ENCODE measurements at regions of chr5 and their contacts with region 1.

Region 1: GRCh38 chr5:132064738-132065331 is 4.4 kb downstream of the IL3 start:
- DNase-seq: peak; percentile 73
- H3K4me3 Mint-ChIP-seq: no peak overlapping the region
- H3K27ac Mint-ChIP-seq: peak overlapping the region; percentile 71
- H3K4me1 Mint-ChIP-seq: peaks cover 55% of the 10 kb centered on the region
- H3K27me3 Mint-ChIP-seq: no peaks in the 10 kb centered on the region

Region 2: GRCh38 chr5:131634996-131635754 is 429.7 kb before region 1 on chr5 and contains the start of gene RAPGEF6:
- intact Hi-C with region 1: loop called (anchors 2 kb)
- DNase-seq: peak; percentile 98
- H3K4me3 Mint-ChIP-seq: peak within 1 kb of the TSS; percentile 95
- H3K27ac Mint-ChIP-seq: peak within 1 kb of the TSS; percentile 97
- H3K4me1 Mint-ChIP-seq: peaks cover 30% of the 10 kb centered on the region
- H3K27me3 Mint-ChIP-seq: no peaks in the 10 kb centered on the region
- total RNA-seq, gene RAPGEF6: 31.0 and 33.9 TPM in 2 replicates

Region 3: DNA sequence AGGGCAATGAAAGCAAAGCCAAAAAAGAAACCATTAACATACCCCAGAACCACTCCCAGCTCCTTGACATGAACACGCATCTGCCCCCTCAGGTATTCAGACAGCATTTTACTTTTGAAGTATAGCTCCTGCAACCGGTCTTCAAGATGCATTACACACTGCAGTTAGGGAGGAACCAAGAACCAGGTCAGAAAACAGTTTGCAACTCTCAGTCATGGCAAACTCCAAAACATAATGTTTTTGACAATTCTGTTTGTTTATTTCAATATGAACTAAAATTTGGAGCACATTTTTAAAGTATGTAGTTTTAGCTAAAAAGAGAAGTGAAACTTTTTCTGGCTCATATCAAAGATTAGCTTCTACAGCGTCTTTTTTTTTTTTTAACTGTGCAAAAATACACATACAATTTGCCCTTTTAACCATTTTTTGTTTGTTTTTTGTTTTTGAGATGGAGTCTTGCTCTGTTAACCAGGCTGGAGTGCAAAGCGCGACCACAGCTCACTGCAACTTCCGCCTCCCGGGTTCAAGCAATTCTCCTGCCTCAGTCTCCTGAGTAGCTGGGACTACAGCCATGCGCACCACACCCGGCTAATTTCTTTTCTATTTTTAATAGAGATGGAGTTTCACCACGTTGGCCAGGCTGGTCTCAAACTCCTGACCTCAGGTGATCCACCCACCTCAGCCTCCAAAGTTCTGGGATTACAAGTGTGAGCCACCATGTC is 417.6 kb before region 1 on chr5:
- intact Hi-C with region 1: no loop called
- DNase-seq: no peak
- H3K4me3 Mint-ChIP-seq: no peak overlapping the region
- H3K27ac Mint-ChIP-seq: no peak overlapping the region
- H3K4me1 Mint-ChIP-seq: peaks cover 2% of the 10 kb centered on the region
- H3K27me3 Mint-ChIP-seq: no peaks in the 10 kb centered on the region

Region 4: DNA sequence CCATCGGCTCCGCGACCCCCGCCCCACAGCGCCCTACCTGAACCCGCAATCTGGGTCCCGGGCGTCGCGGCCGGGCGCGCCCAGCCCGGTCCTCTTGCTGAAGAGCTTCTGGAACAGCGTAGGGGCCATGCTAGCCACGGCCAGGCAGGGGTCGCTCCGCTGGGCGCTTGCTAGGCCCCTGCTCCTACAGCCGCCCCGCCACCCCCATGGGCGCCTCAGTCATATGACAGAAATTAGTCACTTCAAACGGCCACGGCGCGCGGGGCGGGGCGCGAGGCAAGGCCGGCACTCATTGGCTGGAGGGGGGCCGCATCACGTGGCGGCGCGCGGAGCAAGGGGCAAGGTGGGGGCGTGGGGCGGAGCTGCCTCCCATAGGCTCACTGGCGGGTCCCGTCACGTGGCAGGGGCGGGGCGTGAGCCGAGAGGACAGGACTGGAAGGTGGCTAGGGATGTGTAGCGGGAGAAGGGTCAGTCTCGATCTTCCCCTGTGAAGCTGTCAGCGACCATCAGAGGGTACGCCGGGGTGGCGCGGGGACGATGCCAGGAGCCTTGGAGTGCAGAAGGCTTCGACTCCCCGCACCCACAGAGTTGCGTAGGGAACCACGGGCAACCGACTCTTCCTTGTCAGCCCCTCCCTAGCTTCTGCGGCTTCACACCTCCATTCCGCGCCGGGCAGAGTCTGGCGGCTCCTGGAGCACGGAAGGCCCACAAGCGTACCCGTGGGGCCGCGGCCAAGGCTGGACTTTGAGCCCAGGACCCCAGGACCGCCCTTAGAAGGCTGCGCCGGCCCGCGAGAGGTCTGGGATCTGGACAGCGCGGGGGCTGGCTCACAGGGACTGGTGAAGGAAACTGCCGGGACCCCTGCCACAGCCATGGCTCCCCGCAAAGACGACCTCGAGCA is 267.8 kb before region 1 on chr5 and contains the start of gene FNIP1:
- intact Hi-C with region 1: loop called (anchors 10 kb)
- DNase-seq: peak; percentile 99
- H3K4me3 Mint-ChIP-seq: peak within 1 kb of the TSS; percentile 97
- H3K27ac Mint-ChIP-seq: peak within 1 kb of the TSS; percentile 91
- H3K4me1 Mint-ChIP-seq: peaks cover 28% of the 10 kb centered on the region
- H3K27me3 Mint-ChIP-seq: peaks cover 8% of the 10 kb centered on the region
- total RNA-seq, gene FNIP1: 18.1 and 18.8 TPM in 2 replicates

Region 5: DNA sequence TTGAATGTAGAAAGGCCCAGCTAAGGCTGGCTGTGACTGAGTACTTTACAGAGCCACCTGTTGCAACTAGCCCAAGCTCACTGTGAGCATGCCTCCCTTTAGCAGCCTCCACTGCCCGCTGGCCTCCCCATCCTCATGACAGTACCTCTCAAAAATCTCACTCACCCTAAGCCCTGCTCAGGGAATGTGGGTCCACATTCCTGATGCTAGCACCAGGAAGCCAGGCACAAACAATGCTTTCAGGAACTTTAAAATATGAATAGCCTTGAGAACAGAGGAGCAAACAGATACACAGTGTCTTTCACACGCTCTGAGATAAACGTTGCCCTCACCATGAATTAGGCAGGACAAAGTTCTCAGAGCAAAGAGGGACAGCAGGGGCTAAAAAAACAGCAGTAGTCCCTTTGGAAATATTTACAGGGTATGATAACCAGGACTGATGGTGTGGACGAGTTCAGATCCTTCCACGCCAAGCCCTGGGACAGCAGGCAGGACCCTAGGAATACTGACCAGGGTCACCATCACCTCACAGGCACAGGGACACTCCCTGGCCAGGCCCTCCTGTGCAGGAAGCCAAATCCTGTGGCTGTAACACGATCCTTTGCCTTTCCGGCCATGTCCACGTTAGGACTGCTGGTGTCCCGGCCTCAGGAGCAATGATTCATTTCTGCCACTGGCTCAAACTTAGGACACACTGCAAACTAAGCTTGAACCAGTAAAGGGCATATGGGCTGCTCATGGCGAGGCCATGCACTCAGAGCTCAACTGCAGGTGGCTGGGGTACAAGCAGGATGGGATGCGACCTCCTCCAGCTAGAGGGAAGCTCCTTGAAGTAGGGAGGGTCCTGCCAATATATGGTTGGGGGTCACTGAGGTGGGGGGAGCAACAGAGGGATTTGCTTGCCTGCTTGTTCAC is 62.9 kb before region 1 on chr5:
- intact Hi-C with region 1: no loop called
- DNase-seq: no peak
- H3K4me3 Mint-ChIP-seq: no peak overlapping the region
- H3K27ac Mint-ChIP-seq: no peak overlapping the region
- H3K4me1 Mint-ChIP-seq: peaks cover 34% of the 10 kb centered on the region
- H3K27me3 Mint-ChIP-seq: no peaks in the 10 kb centered on the region

Region 6: GRCh38 chr5:132019857-132020555 is 44.8 kb before region 1 on chr5:
- intact Hi-C with region 1: loop called (anchors 2 kb)
- DNase-seq: peak; percentile 82
- H3K4me3 Mint-ChIP-seq: peak overlapping the region; percentile 34
- H3K27ac Mint-ChIP-seq: peak overlapping the region; percentile 92
- H3K4me1 Mint-ChIP-seq: peaks cover 48% of the 10 kb centered on the region
- H3K27me3 Mint-ChIP-seq: peaks cover 24% of the 10 kb centered on the region

Region 7: DNA sequence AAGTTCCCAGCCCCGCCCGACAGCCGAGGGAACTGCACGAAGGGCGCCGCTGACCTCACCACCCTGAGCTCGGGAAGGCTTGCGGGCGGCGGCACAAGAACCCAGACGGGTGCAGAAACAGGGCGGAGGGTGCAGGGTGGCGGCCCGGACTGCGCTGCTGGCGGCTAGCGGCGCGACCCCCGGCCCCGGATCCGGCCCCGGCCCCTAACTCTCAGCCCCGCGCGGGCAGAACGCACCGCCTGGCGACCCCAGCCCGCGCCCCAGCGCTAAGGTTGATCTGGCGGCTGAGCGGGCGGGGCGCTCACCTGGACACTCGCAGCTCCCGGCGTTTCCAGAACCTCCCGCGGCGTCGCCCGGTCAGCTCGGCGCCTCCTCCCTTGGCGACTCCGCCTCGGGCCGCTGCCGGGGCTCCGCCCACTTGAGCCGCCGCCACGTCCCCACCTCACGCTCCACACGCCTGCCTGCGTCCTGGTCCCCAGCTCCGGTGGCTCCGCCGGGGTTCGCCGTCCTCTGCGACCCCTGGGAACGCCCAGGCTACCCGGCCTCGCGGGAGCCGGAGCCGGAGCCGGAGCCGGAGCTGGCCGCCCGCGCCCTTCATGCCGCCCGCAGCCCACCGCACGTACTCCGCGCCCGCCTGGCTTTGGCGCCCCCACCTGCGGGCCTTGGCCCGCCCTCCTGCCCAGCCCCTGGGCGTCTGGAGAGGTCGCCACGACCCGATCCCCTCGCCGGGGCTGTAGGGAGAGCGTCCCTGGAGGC is 162.8 kb after region 1 on chr5 and contains the start of gene P4HA2:
- intact Hi-C with region 1: loop called (anchors 2 kb)
- DNase-seq: peak; percentile 40
- H3K4me3 Mint-ChIP-seq: peak within 1 kb of the TSS; percentile 76
- H3K27ac Mint-ChIP-seq: no peak within 1 kb of the TSS
- H3K4me1 Mint-ChIP-seq: peaks cover 56% of the 10 kb centered on the region
- H3K27me3 Mint-ChIP-seq: peaks cover 12% of the 10 kb centered on the region
- total RNA-seq, gene P4HA2: 44.9 and 47.0 TPM in 2 replicates

Region 8: DNA sequence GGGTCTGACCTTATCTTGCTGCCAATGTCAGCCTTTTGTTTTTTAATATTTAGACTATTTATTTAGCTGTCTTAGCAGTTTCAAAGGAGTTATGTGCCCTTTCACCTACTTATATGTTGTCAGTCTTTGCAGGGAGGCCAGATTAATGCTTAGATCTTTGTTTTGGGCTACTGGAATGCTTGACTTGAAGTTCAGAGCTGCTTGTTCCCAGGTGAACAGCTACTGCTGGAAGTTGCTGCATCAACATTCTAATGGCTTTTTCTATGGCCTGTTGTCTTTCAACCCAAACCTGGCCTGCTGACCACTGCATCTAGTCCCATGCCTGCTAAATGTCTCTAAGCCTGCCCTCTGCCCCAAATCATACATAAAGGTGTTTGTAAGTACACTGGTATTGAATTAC is 307.7 kb after region 1 on chr5:
- intact Hi-C with region 1: no loop called
- DNase-seq: no peak
- H3K4me3 Mint-ChIP-seq: no peak overlapping the region
- H3K27ac Mint-ChIP-seq: no peak overlapping the region
- H3K4me1 Mint-ChIP-seq: peaks cover 20% of the 10 kb centered on the region
- H3K27me3 Mint-ChIP-seq: no peaks in the 10 kb centered on the region

Region 9: DNA sequence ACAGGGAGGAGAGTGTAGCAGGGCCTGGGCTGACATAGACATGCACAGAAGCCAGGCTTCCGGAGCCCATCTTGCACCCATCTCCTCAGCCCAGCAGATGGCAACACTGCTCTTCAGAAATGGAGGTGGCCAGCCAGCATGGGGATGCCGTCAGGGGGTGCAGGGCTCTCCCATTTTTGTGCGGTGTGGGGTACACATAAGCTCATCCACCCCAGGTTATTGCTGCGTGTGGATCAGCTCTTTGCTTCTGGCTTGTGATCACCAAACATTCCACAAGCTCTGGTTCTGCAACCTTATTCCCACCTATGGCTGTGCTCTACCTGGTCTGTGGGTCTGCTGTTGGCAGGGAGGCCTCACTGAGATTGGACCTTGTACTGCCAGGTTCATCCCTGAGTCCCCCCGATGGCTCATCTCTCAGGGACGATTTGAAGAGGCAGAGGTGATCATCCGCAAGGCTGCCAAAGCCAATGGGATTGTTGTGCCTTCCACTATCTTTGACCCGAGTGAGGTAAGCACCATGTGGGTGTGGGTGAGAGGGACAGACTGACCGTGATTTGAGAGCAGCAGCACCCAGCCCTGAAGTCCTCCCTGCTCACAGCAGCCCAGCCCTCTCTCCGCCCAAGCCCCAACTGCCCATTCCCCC is 321.9 kb after region 1 on chr5:
- intact Hi-C with region 1: loop called (anchors 1 kb)
- DNase-seq: peak; percentile 73
- H3K4me3 Mint-ChIP-seq: no peak overlapping the region
- H3K27ac Mint-ChIP-seq: peak overlapping the region; percentile 24
- H3K4me1 Mint-ChIP-seq: peaks cover 42% of the 10 kb centered on the region
- H3K27me3 Mint-ChIP-seq: no peaks in the 10 kb centered on the region

Measured in activated T-helper 2 cell treated with anti-CD3 and anti-CD28 coated beads, Interferon-gamma antibody, Interleukin-2, Interleukin-4, amounts not matched to agents 10 μg/mL and 5 μg/mL and 100 μg/mL, durations not matched to agents 14 hours and 24 hours and 36 hours (primary cell).